Caco-2 (cell line): ENCODE measurements at regions of chr1 and their contacts with region 1.

Region 1: DNA sequence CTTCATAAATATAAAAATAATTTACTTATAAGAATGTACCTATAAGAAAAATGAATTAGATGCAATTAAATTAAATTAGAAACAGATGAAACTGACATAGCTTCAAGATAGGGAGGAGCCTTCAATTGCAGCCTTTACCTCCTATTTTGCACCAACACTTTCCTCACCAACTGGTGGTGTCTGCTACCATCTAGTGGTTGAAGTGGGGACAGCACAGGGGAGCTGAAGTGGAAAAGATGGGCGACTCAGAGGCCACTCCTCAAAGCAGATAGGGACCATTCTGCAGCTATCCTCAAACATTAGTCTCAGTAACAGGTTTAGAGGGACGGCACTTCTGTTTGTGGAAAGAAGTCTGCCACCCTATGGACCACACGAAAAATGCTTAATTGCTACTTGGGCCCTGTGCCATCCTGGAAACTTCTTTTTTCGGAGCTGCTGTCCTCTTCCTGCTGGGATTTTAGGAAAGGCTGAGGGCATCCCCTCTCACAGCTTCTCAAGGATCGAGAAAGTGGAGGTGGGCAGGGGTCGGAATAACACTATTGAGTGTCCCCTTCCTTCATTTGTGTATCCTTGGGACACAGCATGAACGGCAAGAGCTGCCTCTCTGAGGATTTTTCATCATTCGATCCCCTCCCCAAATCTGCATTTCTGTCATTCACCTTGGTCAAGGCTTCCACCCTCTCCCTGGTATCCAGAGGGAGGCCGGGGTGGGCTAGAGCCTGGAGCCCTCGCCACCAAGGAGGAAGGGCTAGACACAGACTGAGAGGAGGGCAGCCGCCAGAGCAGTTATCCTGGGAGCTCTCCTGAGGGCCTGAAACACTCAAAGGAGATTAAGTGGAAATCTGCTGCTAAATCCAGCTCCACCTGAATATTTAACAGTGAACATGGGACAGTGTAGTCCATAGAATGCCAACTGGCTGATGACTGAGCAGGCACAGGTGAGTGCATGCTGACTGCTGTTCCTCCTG is 9.6 kb downstream of the PROK1 start:
- DNase-seq: peak; percentile 62 to 83
- H3K4me3 ChIP-seq: no peak overlapping the region
- H3K4me3 Mint-ChIP-seq: no peak overlapping the region
- H3K27ac Mint-ChIP-seq: no peak overlapping the region
- H3K4me1 ChIP-seq: peaks cover 25% of the 10 kb centered on the region
- H3K4me1 Mint-ChIP-seq: peaks cover 15% of the 10 kb centered on the region
- H3K27me3 ChIP-seq: no peaks in the 10 kb centered on the region
- H3K27me3 Mint-ChIP-seq: no peaks in the 10 kb centered on the region
- CTCF ChIP-seq: peak; percentile 83 to 85

Region 2: DNA sequence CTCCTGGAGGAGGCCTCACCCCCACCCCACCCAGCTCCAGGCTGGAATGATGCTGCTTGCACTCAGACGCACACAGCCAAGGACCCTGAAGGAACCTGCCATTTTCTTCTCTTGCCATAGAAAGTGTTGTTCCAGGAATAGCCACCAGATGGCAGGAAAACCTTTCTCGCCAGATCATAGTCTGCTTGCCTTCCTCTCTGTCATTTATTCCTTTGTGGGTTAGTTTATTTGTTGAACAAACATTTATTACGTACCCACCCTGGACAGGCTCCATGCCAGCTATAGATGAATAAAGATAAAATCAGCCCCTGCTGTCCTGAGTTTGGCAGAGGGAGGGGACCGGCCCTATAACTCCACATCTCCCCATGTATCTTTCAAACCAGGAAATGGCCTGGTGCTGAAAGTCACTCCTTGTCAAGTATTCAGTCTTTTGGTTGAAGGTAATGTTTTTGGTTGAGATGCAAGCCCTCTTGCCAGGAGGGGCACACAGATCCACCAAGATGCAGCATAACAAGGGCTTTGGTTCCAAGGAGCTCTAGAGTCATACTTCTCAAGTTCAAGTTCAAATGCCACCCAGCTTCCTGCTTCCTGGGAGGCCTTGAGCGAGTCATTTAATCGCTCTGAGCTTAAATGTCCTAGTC is 257.4 kb before region 1 on chr1:
- CTCF ChIA-PET with region 1: interaction called, 21 read pairs
- POLR2A ChIA-PET with region 1: no interaction called
- intact Hi-C with region 1: loop called (anchors 1 kb)
- DNase-seq: peak; percentile 43 to 66
- H3K4me3 ChIP-seq: no peak overlapping the region
- H3K4me3 Mint-ChIP-seq: no peak overlapping the region
- H3K27ac Mint-ChIP-seq: no peak overlapping the region
- H3K4me1 ChIP-seq: no peaks in the 10 kb centered on the region
- H3K4me1 Mint-ChIP-seq: no peaks in the 10 kb centered on the region
- H3K27me3 ChIP-seq: no peaks in the 10 kb centered on the region
- H3K27me3 Mint-ChIP-seq: no peaks in the 10 kb centered on the region
- CTCF ChIP-seq: peak; percentile 53 to 59

Region 3: GRCh38 chr1:110312188-110313121 is 148.1 kb before region 1 on chr1:
- CTCF ChIA-PET with region 1: interaction called, 11 read pairs
- POLR2A ChIA-PET with region 1: no interaction called
- intact Hi-C with region 1: no loop called
- DNase-seq: peak; percentile 67 to 74
- H3K4me3 ChIP-seq: no peak overlapping the region
- H3K4me3 Mint-ChIP-seq: no peak overlapping the region
- H3K27ac Mint-ChIP-seq: no peak overlapping the region
- H3K4me1 ChIP-seq: no peaks in the 10 kb centered on the region
- H3K4me1 Mint-ChIP-seq: no peaks in the 10 kb centered on the region
- H3K27me3 ChIP-seq: no peaks in the 10 kb centered on the region
- H3K27me3 Mint-ChIP-seq: no peaks in the 10 kb centered on the region
- CTCF ChIP-seq: peak; percentile 68 to 87

Region 4: GRCh38 chr1:110412576-110412975 is 48.0 kb before region 1 on chr1:
- CTCF ChIA-PET with region 1: interaction called, 51 read pairs
- POLR2A ChIA-PET with region 1: no interaction called
- intact Hi-C with region 1: loop called (anchors 1 kb)
- DNase-seq: peak; percentile 65 to 74
- H3K4me3 ChIP-seq: no peak overlapping the region
- H3K4me3 Mint-ChIP-seq: no peak overlapping the region
- H3K27ac Mint-ChIP-seq: no peak overlapping the region
- H3K4me1 ChIP-seq: peaks cover 7% of the 10 kb centered on the region; the same call in 1 of the 2 replicates
- H3K4me1 Mint-ChIP-seq: peaks cover 7% of the 10 kb centered on the region
- H3K27me3 ChIP-seq: no peaks in the 10 kb centered on the region
- H3K27me3 Mint-ChIP-seq: no peaks in the 10 kb centered on the region
- CTCF ChIP-seq: peak; percentile 65 to 75

Region 5: DNA sequence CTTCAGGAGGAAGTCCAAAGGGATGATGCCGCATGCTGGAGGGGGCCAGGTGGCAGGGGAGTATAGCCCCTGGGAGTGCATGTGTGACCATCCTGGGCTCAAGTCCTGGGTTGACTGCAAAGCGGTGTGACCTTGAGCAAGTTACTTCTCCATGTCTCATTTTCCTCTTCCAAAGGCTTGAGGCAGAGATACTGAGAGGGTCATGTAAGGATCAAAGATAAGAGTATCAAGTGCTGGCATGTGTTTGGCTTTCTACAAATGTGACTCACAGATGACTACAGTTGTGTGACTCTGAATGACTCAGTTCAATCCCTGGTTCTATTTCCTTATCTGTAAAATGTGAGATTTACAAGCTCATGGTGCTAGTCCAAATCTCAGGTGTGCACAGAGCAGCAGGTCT is 16.5 kb after region 1 on chr1:
- CTCF ChIA-PET with region 1: interaction called, 9 read pairs
- POLR2A ChIA-PET with region 1: interaction called, 4 read pairs
- intact Hi-C with region 1: loop called (anchors 1 kb)
- DNase-seq: peak in 1 of 2 experiments; percentile 26
- H3K4me3 ChIP-seq: no peak overlapping the region
- H3K4me3 Mint-ChIP-seq: peak overlapping the region; percentile 27
- H3K27ac Mint-ChIP-seq: peak overlapping the region; percentile 89
- H3K4me1 ChIP-seq: peaks cover 57% of the 10 kb centered on the region
- H3K4me1 Mint-ChIP-seq: peaks cover 35% of the 10 kb centered on the region
- H3K27me3 ChIP-seq: no peaks in the 10 kb centered on the region
- H3K27me3 Mint-ChIP-seq: no peaks in the 10 kb centered on the region
- CTCF ChIP-seq: no peak

Region 6: GRCh38 chr1:110686188-110686587 is 225.7 kb after region 1 on chr1:
- CTCF ChIA-PET with region 1: no interaction called
- POLR2A ChIA-PET with region 1: no interaction called
- intact Hi-C with region 1: no loop called
- DNase-seq: no peak
- H3K4me3 ChIP-seq: no peak overlapping the region
- H3K4me3 Mint-ChIP-seq: no peak overlapping the region
- H3K27ac Mint-ChIP-seq: no peak overlapping the region
- H3K4me1 ChIP-seq: no peaks in the 10 kb centered on the region
- H3K4me1 Mint-ChIP-seq: no peaks in the 10 kb centered on the region
- H3K27me3 ChIP-seq: no peaks in the 10 kb centered on the region
- H3K27me3 Mint-ChIP-seq: peaks cover 13% of the 10 kb centered on the region
- CTCF ChIP-seq: no peak